ENCODE measurements at regions of chr2 and their contacts with region 1.

Region 1: GRCh38 chr2:20642055-20642971 is 8.6 kb downstream of the HS1BP3 start:
- DNase-seq: peak; percentile 81

Region 2: GRCh38 chr2:20106746-20107145 is 535.6 kb before region 1 on chr2:
- in situ Hi-C with region 1: loop called (anchors 25 kb)
- DNase-seq: no peak

Region 3: DNA sequence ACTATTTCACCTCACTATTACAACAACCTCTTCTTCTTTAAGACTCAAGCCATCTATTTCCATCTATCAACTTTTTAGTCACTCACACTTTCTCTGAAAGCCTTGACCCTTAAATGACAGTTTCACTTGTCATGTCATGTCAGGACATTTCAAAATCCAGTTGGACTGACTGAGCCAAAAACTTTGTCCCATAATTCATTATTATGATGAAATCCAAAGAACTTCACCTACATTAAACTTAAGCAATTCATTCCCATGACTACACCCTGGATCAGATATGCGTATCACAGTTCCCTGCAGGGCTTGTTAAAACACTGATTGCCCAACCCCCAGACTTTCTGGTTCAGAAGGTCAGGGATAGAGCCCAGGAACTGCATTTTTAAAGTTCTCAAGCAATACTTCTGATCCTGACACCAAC is 154.1 kb after region 1 on chr2:
- in situ Hi-C with region 1: no loop called
- DNase-seq: no peak

Measured in KBM-7 (cell line).